Ascending aorta (tissue), 2 donors: ENCODE measurements at regions of chr1 and their contacts with region 1.

Region 1: GRCh38 chr1:154479764-154480421 is 22.1 kb upstream of the TDRD10 start:
- DNase-seq: peak in 1 of 2 donors; percentile 82
- H3K4me3 ChIP-seq: no peak overlapping the region
- H3K27ac ChIP-seq: no peak overlapping the region
- H3K4me1 ChIP-seq: no peaks in the 10 kb centered on the region
- H3K27me3 ChIP-seq: no peaks in the 10 kb centered on the region
- CTCF ChIP-seq: peak; percentile 90 to 98 (median 95)

Region 2: GRCh38 chr1:154520333-154520732 is 40.4 kb after region 1 on chr1:
- intact Hi-C with region 1: no loop called
- DNase-seq: no peak
- H3K4me3 ChIP-seq: no peak overlapping the region
- H3K27ac ChIP-seq: no peak overlapping the region
- H3K4me1 ChIP-seq: no peaks in the 10 kb centered on the region
- H3K27me3 ChIP-seq: no peaks in the 10 kb centered on the region
- CTCF ChIP-seq: no peak

Region 3: DNA sequence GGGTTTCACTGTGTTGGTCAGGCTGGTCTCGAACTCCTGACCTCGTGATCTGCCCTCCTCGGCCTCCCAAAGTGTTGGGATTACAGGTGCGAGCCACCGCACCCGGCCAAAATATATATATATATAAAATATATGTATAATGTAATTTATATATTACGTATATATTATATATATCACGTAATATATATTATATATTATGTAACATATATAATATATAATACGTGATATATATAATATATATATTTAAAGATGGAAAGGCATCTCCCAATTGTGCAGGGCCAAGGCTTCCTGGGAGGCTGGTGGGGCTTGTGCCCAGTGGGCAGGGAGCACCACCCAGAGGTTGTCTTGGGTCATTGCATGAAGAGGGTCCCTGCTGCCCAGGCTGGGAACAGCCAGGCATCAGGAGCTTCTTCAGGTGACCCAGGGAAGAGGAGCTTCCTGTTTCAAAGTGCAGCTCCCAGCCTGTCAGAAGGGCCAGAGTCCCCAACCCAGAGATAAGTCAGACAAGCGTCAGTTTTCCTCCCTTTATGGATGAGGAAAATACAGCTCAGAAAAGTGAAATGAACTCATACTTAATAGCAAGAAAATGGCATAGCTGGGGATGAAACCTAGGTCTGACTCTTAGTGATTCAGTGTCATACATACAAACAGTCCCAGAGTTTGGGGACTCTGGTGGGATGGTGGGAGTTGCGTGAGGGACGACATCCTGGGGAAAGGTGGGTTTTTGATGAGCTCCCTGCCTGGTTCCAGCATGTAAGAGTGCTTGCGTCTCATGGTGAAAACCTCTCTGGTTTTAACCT is 66.6 kb after region 1 on chr1:
- intact Hi-C with region 1: loop called (anchors 5 kb)
- DNase-seq: no peak
- H3K4me3 ChIP-seq: no peak overlapping the region
- H3K27ac ChIP-seq: no peak overlapping the region
- H3K4me1 ChIP-seq: no peaks in the 10 kb centered on the region
- H3K27me3 ChIP-seq: no peaks in the 10 kb centered on the region
- CTCF ChIP-seq: peak; percentile 49 to 64 (median 59)

Region 4: GRCh38 chr1:154760469-154760933 is 280.6 kb after region 1 on chr1:
- intact Hi-C with region 1: loop called (anchors 10 kb)
- DNase-seq: peak in 1 of 2 donors; percentile 65
- H3K4me3 ChIP-seq: peak overlapping the region; percentile 16 to 40
- H3K27ac ChIP-seq: no peak overlapping the region
- H3K4me1 ChIP-seq: peaks cover 0 to 4% of the 10 kb centered on the region in 2 donors
- H3K27me3 ChIP-seq: no peaks in the 10 kb centered on the region
- CTCF ChIP-seq: peak; percentile 50 to 75 (median 71)

Region 5: GRCh38 chr1:154878371-154879022 is 398.6 kb after region 1 on chr1:
- intact Hi-C with region 1: loop called (anchors 1 kb)
- DNase-seq: peak in 1 of 2 donors; percentile 88
- H3K4me3 ChIP-seq: no peak overlapping the region
- H3K27ac ChIP-seq: no peak overlapping the region
- H3K4me1 ChIP-seq: no peaks in the 10 kb centered on the region
- H3K27me3 ChIP-seq: no peaks in the 10 kb centered on the region
- CTCF ChIP-seq: peak; percentile 84 to 89 (median 88)